ENCODE measurements at regions of chr3 and their contacts with region 1.

Region 1: GRCh38 chr3:107660306-107660976 is 137.7 kb downstream of the BBX start:
- DNase-seq: no peak
- ATAC-seq: peak; percentile 61
- H3K4me3 ChIP-seq: no peak overlapping the region
- H3K27ac ChIP-seq: no peak overlapping the region
- H3K4me1 ChIP-seq: peaks cover 13% of the 10 kb centered on the region
- H3K27me3 ChIP-seq: no peaks in the 10 kb centered on the region
- CTCF ChIP-seq: peak; percentile 49 to 61 (median 57); a peak in 5 of 6 replicates
- EP300 ChIP-seq: no peak
- POLR2A ChIP-seq: no peak
- RAD21 ChIP-seq: peak; percentile 66

Region 2: GRCh38 chr3:107643038-107643883 is 17.2 kb before region 1 on chr3:
- CTCF ChIA-PET with region 1: interaction called, 59 read pairs
- POLR2A ChIA-PET with region 1: interaction called, 3 read pairs
- RAD21 ChIA-PET with region 1: interaction called, 18 read pairs
- SMC1A ChIA-PET with region 1: interaction called, 70 read pairs
- in situ Hi-C with region 1: no loop called
- intact Hi-C with region 1: no loop called
- DNase-seq: no peak
- ATAC-seq: peak; percentile 87
- H3K4me3 ChIP-seq: no peak overlapping the region
- H3K27ac ChIP-seq: no peak overlapping the region
- H3K4me1 ChIP-seq: peaks cover 14% of the 10 kb centered on the region
- H3K27me3 ChIP-seq: no peaks in the 10 kb centered on the region
- CTCF ChIP-seq: peak; percentile 34 to 53 (median 48); a peak in 5 of 6 replicates
- EP300 ChIP-seq: no peak
- POLR2A ChIP-seq: no peak
- RAD21 ChIP-seq: peak; percentile 58

Region 3: GRCh38 chr3:107684431-107684925 is 24.0 kb after region 1 on chr3:
- CTCF ChIA-PET with region 1: interaction called, 212 read pairs
- POLR2A ChIA-PET with region 1: interaction called, 3 read pairs
- RAD21 ChIA-PET with region 1: interaction called, 5 read pairs
- SMC1A ChIA-PET with region 1: interaction called, 13 read pairs
- in situ Hi-C with region 1: no loop called
- intact Hi-C with region 1: no loop called
- DNase-seq: no peak
- ATAC-seq: no peak
- H3K4me3 ChIP-seq: no peak overlapping the region
- H3K27ac ChIP-seq: no peak overlapping the region
- H3K4me1 ChIP-seq: peaks cover 5% of the 10 kb centered on the region; the same call in 1 of the 2 replicates
- H3K27me3 ChIP-seq: no peaks in the 10 kb centered on the region
- CTCF ChIP-seq: no peak
- EP300 ChIP-seq: no peak
- POLR2A ChIP-seq: no peak
- RAD21 ChIP-seq: no peak

Region 4: GRCh38 chr3:107740992-107741896 is 80.8 kb after region 1 on chr3:
- CTCF ChIA-PET with region 1: interaction called, 55 read pairs
- POLR2A ChIA-PET with region 1: no interaction called
- RAD21 ChIA-PET with region 1: interaction called, 23 read pairs
- SMC1A ChIA-PET with region 1: interaction called, 48 read pairs
- in situ Hi-C with region 1: no loop called
- intact Hi-C with region 1: loop called (anchors 2 kb)
- DNase-seq: no peak
- ATAC-seq: no peak
- H3K4me3 ChIP-seq: no peak overlapping the region
- H3K27ac ChIP-seq: no peak overlapping the region
- H3K4me1 ChIP-seq: no peaks in the 10 kb centered on the region
- H3K27me3 ChIP-seq: no peaks in the 10 kb centered on the region
- CTCF ChIP-seq: peak in 2 of 3 experiments; percentile 21 to 36; a peak in 3 of 6 replicates
- EP300 ChIP-seq: no peak
- POLR2A ChIP-seq: no peak
- RAD21 ChIP-seq: peak; percentile 67

Region 5: DNA sequence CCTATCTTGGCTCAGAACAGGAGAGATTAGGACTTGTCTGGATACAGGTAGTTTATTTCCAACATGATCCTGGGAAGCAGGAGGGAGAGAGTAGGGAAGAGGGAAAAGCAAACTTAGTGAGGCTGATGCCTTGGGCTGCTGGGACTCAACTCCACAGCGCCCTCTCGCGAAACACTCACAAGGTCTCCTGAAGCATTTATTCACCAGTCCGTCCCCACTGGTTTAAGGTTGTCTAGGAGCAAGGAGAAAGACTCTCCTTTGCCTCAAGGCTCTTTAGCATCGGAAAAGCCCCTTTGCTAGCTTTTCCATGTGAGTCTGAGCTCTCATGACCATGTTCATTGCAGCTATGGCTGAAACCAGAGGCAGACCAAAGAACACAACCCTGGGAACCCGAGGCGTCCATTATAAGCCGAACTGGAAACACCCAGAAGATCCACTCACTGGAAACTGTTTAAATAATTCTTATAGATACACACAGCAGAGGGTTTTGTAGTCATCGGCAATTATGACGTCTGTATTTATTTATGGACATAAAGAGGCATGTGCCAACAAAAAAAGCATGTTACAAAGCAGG is 185.9 kb after region 1 on chr3:
- CTCF ChIA-PET with region 1: interaction called, 17 read pairs
- POLR2A ChIA-PET with region 1: no interaction called
- RAD21 ChIA-PET with region 1: interaction called, 4 read pairs
- SMC1A ChIA-PET with region 1: interaction called, 4 read pairs
- in situ Hi-C with region 1: no loop called
- intact Hi-C with region 1: no loop called
- DNase-seq: no peak
- ATAC-seq: peak; percentile 64
- H3K4me3 ChIP-seq: no peak overlapping the region
- H3K27ac ChIP-seq: no peak overlapping the region
- H3K4me1 ChIP-seq: no peaks in the 10 kb centered on the region; the same call in 1 of the 2 replicates
- H3K27me3 ChIP-seq: no peaks in the 10 kb centered on the region; a peak in 1 of 4 replicates
- CTCF ChIP-seq: peak; percentile 56 to 61 (median 58)
- EP300 ChIP-seq: no peak
- POLR2A ChIP-seq: no peak
- RAD21 ChIP-seq: peak; percentile 54

Measured in GM12878 (cell line).